Transverse colon (tissue), 4 donors: ENCODE measurements at regions of chr14 and their contacts with region 1.

Region 1: GRCh38 chr14:90235179-90235976 is 21.0 kb upstream of the PSMC1 start:
- DNase-seq: peak; percentile 70
- H3K4me3 ChIP-seq: no peak overlapping the region
- H3K27ac ChIP-seq: no peak overlapping the region
- H3K4me1 ChIP-seq: peaks cover 0 to 3% (median 0%) of the 10 kb centered on the region in 4 donors
- H3K27me3 ChIP-seq: peaks cover 10% of the 10 kb centered on the region
- CTCF ChIP-seq: peak; percentile 87 to 96 (median 89)
- EP300 ChIP-seq: no peak
- POLR2A ChIP-seq: no peak

Region 2: DNA sequence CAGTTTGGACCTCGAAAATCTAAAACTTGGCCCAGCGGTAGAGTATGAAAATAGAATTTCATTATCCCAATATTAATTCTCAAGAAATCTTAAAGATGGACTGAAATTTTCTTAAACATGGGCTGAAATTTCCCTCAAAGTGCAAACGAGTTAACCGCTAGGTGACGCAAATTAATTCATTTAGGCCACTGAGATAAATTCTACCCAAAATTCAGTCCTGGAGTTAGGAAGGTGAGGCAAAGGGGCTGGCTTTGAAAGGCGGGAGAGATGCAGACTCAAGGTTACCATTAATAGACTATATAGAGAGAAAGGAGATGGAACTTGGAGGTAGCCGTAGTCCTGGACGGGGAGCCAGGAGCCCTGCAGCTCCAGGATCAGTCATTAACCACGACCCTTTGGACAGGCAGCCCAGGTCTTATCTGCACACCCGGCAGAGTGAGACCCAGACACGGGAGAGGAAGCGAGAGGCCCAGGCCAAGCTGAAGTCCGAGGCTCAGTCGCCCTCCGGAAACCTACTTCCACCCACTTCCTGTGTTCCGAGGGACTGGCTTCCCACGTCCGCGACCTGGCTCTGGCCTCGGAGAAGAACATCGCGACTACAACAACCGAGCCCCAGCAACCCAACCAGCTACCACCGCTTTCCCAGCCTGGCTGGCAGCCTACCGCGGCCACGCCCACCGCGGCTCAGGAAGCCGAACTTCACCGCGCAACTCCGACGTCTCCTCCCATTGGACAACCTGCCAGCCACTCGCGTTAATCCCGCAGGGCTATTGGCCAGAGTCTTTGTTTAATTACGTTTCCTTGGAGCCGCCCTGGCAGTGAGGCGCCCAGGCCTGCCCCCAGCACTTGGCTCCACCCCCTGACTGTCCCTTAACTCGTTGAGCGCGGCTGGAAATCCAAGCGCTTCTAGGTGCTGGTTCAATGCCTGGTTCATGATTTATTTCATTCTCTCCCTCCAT is 281.0 kb before region 1 on chr14 and contains the start of gene EFCAB11:
- in situ Hi-C with region 1: loop called in 1 of 4 experiments (anchors 25 kb)
- intact Hi-C with region 1: no loop called
- DNase-seq: peak; percentile 97
- H3K4me3 ChIP-seq: peak within 1 kb of the TSS; percentile 32 to 87 (median 68)
- H3K27ac ChIP-seq: peak within 1 kb of the TSS; percentile 86 to 98 (median 96)
- H3K4me1 ChIP-seq: peaks cover 4 to 24% (median 19%) of the 10 kb centered on the region in 4 donors
- H3K27me3 ChIP-seq: no peaks in the 10 kb centered on the region
- CTCF ChIP-seq: peak in 1 of 5 experiments; percentile 6
- EP300 ChIP-seq: no peak
- POLR2A ChIP-seq: peak; percentile 41
- total RNA-seq, gene EFCAB11: 6.0 to 6.7 TPM in 2 of 4 donors, not detected in the others

Region 3: DNA sequence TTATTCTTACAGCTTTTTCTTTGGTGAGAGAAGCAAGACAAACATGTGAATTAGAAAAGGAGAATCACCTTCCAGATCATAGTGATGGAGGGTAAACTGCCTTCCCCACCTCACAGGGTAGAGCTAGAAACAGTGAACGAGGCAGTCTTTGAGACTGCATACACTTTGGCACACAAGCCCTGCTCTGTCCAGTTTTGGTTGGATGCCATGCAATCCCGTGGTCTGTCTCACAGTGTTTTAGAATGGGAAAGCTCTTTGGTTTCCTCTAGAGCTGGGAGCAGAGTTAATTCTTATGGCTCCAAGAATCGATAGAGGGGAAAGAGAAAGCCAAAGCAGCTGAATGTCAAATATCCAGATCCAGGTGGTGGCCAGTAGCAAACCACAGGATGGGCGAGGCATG is 257.7 kb before region 1 on chr14:
- in situ Hi-C with region 1: loop called (anchors 25 kb)
- intact Hi-C with region 1: loop called (anchors 5 kb)
- DNase-seq: no peak
- H3K4me3 ChIP-seq: no peak overlapping the region
- H3K27ac ChIP-seq: no peak overlapping the region
- H3K4me1 ChIP-seq: no peaks in the 10 kb centered on the region
- H3K27me3 ChIP-seq: no peaks in the 10 kb centered on the region
- CTCF ChIP-seq: no peak
- EP300 ChIP-seq: no peak
- POLR2A ChIP-seq: no peak